Gastrocnemius medialis (tissue), 4 donors: ENCODE measurements at regions of chr12 and their contacts with region 1.

Region 1: GRCh38 chr12:52879394-52880351 is 25.2 kb downstream of the KRT8 start:
- DNase-seq: peak; percentile 47 to 53
- ATAC-seq: peak; percentile 83 to 89
- H3K4me3 ChIP-seq: peak overlapping the region in 2 of 4 donors; percentile 21 to 35
- H3K27ac ChIP-seq: no peak overlapping the region
- H3K4me1 ChIP-seq: peaks cover 2 to 8% of the 10 kb centered on the region in 2 donors
- H3K27me3 ChIP-seq: peaks cover 0 to 4% (median 3%) of the 10 kb centered on the region in 3 donors
- CTCF ChIP-seq: peak; percentile 63 to 73 (median 65)
- POLR2A ChIP-seq: no peak

Region 2: GRCh38 chr12:52156736-52157565 is 722.7 kb before region 1 on chr12:
- in situ Hi-C with region 1: loop called in 3 of 4 experiments (anchors 5 to 10 kb)
- intact Hi-C with region 1: loop called (anchors 2 kb)
- DNase-seq: peak; percentile 55 to 67
- ATAC-seq: peak; percentile 69 to 74
- H3K4me3 ChIP-seq: no peak overlapping the region
- H3K27ac ChIP-seq: no peak overlapping the region
- H3K4me1 ChIP-seq: peaks cover 0 to 3% of the 10 kb centered on the region in 2 donors
- H3K27me3 ChIP-seq: no peaks in the 10 kb centered on the region
- CTCF ChIP-seq: peak; percentile 90 to 95 (median 93)
- POLR2A ChIP-seq: no peak

Region 3: DNA sequence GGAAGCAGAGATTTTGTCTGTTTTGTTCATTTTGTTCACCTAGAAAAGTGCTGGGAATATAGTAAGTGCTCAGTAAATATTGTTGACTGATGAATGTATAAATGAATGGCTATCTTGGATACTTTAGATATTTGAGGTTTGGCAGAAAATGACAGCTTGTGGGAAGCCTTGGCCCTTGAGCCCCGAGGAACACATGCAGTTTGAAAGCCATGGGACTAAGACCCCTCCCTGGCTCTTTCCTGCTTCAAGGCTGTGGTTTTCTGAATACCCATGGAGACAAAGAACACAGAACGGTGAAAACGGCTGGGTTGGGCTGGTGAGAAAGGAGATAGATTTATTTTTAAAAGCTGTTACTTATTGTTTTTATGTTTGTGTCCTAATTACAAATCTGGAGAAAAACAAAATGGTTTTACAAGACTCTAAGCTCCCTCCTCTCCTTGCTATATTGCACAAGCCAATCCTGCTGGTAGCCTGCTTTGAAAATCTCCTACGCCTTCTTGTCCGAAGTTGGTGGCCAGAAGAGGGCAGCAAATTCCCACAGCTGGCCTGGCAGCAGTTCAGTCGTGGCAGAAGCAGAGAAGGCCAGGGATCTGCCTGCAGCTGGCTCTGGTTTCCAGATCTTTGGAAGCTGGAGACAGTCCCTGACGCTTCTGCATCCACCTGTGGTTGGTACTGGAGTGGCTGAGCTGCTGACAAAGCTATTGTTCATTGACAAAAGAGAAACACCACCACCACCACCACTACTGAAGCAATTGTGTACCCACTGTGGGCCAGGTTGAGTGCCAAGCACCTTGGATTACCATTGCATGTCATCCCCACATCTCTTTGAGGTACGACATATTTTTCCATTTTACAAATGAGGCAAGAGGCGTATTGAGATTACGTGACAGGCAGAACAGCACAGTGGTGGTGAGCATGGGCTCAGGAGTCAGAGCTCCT is 507.2 kb before region 1 on chr12:
- in situ Hi-C with region 1: loop called in 3 of 4 experiments (anchors 5 to 10 kb)
- intact Hi-C with region 1: loop called (anchors 5 kb)
- DNase-seq: peak; percentile 48 to 71
- ATAC-seq: peak; percentile 84 to 91
- H3K4me3 ChIP-seq: no peak overlapping the region
- H3K27ac ChIP-seq: no peak overlapping the region
- H3K4me1 ChIP-seq: no peaks in the 10 kb centered on the region
- H3K27me3 ChIP-seq: no peaks in the 10 kb centered on the region
- CTCF ChIP-seq: peak; percentile 39 to 67 (median 52)
- POLR2A ChIP-seq: no peak

Region 4: DNA sequence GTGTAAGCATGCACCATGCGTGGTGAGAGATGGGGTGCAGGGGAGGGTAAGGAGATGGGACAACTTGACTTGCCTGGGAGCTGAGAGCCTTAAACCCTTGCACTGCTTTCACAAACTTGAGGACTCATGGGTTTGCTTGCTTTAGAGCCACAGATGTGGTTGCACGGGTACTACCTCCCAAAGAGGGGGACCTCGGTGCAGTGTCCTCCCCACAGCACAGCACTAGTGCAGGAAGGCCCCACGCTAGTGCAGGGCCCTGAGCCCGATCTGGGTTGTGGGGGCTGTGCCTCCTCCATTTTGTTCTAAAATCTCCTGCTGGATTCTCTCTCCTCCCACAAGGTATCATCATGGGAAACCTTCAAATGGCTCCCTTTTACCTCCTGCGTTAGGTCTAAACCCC is 289.7 kb before region 1 on chr12:
- in situ Hi-C with region 1: loop called in 2 of 4 experiments (anchors 5 to 25 kb)
- intact Hi-C with region 1: no loop called
- DNase-seq: no peak
- ATAC-seq: no peak
- H3K4me3 ChIP-seq: no peak overlapping the region
- H3K27ac ChIP-seq: no peak overlapping the region
- H3K4me1 ChIP-seq: no peaks in the 10 kb centered on the region
- H3K27me3 ChIP-seq: no peaks in the 10 kb centered on the region
- CTCF ChIP-seq: no peak
- POLR2A ChIP-seq: no peak

Region 5: GRCh38 chr12:53098982-53099651 is 219.4 kb after region 1 on chr12:
- in situ Hi-C with region 1: loop called in 1 of 4 experiments (anchors 25 kb)
- intact Hi-C with region 1: no loop called
- DNase-seq: peak; percentile 68 to 87
- ATAC-seq: peak; percentile 74 to 76
- H3K4me3 ChIP-seq: peak overlapping the region; percentile 0 to 71 (median 47)
- H3K27ac ChIP-seq: peak overlapping the region; percentile 69 to 81 (median 79)
- H3K4me1 ChIP-seq: peaks cover 12 to 21% of the 10 kb centered on the region in 2 donors
- H3K27me3 ChIP-seq: no peaks in the 10 kb centered on the region
- CTCF ChIP-seq: peak; percentile 90 to 99 (median 93)
- POLR2A ChIP-seq: no peak

Region 6: GRCh38 chr12:53766881-53767280 is 887.2 kb after region 1 on chr12:
- in situ Hi-C with region 1: no loop called
- intact Hi-C with region 1: no loop called
- DNase-seq: no peak
- ATAC-seq: no peak
- H3K4me3 ChIP-seq: no peak overlapping the region
- H3K27ac ChIP-seq: no peak overlapping the region
- H3K4me1 ChIP-seq: no peaks in the 10 kb centered on the region
- H3K27me3 ChIP-seq: peaks cover 0 to 11% (median 0%) of the 10 kb centered on the region in 3 donors
- CTCF ChIP-seq: no peak
- POLR2A ChIP-seq: no peak